Panc1 (cell line): ENCODE measurements at regions of chr13 and their contacts with region 1.

Region 1: GRCh38 chr13:21478881-21479808 is 20.0 kb upstream of the ZDHHC20 start:
- DNase-seq: peak; percentile 27
- ATAC-seq: peak; percentile 73
- H3K4me3 ChIP-seq: peak overlapping the region; percentile 18 to 39; a peak in 3 of 4 replicates
- H3K27ac ChIP-seq: no peak overlapping the region
- H3K4me1 ChIP-seq: peaks cover 4% of the 10 kb centered on the region
- H3K27me3 ChIP-seq: no peaks in the 10 kb centered on the region
- CTCF ChIP-seq: peak; percentile 55; the same call in 1 of the 2 replicates

Region 2: DNA sequence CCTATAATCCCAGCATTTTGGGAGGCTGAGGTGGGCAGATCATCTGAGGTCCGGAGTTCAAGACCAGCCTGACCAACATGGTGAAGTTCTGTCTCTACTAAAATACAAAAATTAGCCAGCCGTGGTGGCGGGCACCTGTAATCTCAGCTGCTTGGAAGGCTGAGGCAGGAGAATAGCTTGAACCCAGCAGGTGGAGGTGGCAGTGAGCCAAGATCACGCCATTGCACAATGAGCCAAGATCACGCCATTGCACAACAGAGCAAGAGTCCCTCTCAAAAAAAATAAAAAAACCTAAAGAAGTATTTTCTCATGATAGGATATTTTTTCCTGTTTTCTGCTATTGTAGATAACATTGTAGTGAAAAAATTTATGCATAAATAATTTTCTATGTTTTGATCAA is 898.9 kb before region 1 on chr13:
- CTCF ChIA-PET with region 1: no interaction called
- POLR2A ChIA-PET with region 1: no interaction called
- in situ Hi-C with region 1: no loop called
- intact Hi-C with region 1: no loop called
- DNase-seq: no peak
- ATAC-seq: no peak
- H3K4me3 ChIP-seq: no peak overlapping the region
- H3K27ac ChIP-seq: no peak overlapping the region
- H3K4me1 ChIP-seq: no peaks in the 10 kb centered on the region
- H3K27me3 ChIP-seq: no peaks in the 10 kb centered on the region
- CTCF ChIP-seq: no peak

Region 3: DNA sequence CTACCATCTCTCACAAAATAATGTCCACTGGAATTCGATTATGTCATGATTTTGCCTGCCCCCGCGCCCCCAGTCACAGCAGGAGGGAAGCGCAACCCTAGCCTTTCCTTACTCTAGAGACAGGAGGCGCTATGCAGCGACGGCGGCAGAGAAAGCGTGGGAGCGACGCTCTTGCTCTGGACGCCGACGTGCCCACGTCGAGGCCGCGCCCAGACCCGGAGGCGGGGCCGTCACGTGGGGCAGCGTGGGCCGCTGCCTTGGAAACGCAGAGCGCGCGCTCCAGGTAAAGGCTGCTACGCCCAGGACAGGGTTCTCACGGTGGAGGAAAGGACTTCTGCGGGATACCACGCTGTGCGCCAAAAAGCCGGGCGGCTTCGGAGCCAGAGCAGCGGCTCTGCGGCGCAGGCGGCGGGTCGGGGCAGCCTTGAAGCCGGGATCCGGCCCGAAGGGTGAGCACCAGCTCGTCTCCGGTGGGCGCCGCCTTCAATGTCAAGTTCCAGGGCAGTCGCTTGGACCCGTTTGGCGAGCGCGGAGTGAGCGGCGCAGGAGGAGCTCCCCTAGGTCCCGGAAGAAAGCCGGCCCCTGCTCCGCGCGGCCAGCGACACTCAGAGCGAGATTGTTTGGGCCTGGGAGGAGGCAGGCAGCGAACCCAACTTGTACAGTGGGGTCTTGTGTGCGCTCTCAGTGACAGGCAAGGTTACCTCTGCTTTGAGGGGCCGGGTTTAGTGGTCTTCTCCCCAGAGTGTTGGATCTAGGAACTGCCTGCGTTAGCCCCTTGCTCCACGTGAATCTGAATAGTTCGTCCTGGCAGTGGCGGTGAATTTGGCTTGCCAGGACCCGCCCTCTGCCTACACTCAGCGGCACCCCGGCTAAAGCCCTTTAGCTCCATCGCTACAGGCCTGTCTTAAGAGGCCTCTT is 181.0 kb before region 1 on chr13:
- CTCF ChIA-PET with region 1: interaction called, 8 read pairs
- POLR2A ChIA-PET with region 1: interaction called, 4 read pairs
- in situ Hi-C with region 1: no loop called
- intact Hi-C with region 1: loop called (anchors 2 kb)
- DNase-seq: peak; percentile 46
- ATAC-seq: peak; percentile 97
- H3K4me3 ChIP-seq: peak overlapping the region; percentile 80 to 85
- H3K27ac ChIP-seq: peak overlapping the region; percentile 70
- H3K4me1 ChIP-seq: peaks cover 13% of the 10 kb centered on the region
- H3K27me3 ChIP-seq: no peaks in the 10 kb centered on the region
- CTCF ChIP-seq: peak; percentile 83